Posterior vena cava (tissue), 2 donors: ENCODE measurements at regions of chr5 and their contacts with region 1.

Region 1: DNA sequence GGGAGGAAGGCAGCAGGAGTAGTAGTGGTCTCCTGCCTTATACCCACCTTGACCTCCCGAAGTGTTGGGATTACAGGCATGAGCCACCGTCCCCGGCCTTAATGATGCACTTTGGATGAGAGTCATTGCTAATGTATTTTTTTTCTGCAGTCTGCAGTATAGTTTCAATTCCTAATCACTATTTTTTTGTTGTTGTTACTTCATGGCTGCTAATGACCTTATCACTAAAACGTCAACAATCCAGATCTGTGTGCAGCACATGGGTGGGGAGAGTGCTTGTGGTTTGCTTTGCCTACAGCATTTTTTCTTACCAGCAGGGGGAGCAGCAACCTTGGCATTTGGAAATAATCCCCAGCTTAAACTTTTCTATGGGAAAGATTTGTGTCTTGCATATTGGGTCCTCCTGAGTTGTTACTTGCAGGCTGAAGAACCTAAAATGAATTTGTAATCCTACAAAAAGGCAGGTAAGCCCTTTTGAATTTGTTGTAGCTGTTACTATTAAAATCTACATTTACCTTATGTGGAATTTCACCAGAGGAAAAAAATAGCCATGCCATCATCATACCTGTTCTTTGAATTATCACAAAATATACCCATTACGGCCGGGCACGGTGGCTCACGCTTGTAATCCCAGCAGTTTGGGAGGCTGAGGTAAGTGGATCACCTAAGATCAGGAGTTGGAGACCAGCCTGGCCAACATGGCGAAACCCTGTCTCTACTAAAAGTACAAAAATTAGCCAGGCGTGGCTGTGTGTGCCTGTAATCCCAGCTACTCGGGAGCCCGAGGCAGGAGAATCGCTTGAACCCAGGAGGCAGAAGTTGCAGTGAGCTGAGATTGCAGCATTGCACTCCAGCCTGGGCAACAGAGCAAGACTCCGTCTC is 6.3 kb upstream of the MED7 start:
- DNase-seq: no peak

Region 2: GRCh38 chr5:155700333-155700732 is 1448.6 kb before region 1 on chr5:
- intact Hi-C with region 1: no loop called
- DNase-seq: no peak

Region 3: GRCh38 chr5:156984064-156984463 is 164.9 kb before region 1 on chr5:
- intact Hi-C with region 1: no loop called
- DNase-seq: peak; percentile 58

Region 4: GRCh38 chr5:157115012-157115411 is 34.0 kb before region 1 on chr5:
- intact Hi-C with region 1: loop called in 1 of 2 experiments (anchors 2 kb)
- DNase-seq: no peak

Region 5: GRCh38 chr5:157253547-157253946 is 104.6 kb after region 1 on chr5:
- intact Hi-C with region 1: no loop called
- DNase-seq: no peak

Region 6: DNA sequence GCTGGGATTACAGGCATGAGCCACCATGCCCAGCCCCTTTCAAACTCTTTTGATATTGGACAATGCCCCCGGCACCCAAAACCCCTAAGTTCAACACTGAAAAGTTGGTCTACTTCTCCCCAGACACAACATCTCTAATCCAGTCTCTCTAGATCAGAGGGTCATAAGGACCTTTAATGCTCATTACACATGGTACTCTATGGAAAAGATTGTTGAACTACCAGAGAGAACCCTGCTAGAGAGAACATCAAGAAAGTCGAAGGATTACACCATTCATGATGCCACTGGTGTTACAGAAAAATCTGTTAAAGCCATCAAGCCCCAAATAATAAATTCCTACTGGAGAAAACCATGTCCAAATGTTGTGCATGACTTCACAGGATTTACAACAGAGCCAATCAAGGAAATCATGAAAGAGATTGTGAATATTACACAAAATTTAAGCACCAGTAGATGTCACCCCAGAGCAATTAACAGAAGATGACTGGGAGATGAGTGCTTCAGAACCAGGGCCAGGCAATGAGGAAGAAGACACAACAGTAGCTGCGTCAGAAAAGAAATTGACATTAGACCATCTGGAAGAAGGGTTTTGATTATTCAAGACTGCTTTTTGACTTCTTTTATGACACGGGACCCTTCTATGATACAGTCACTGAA is 282.7 kb after region 1 on chr5:
- intact Hi-C with region 1: no loop called
- DNase-seq: no peak